Naive thymus-derived CD4-positive, alpha-beta T cell (primary cell): ENCODE measurements at regions of chr10 and their contacts with region 1.

Region 1: GRCh38 chr10:91006001-91006751 is 85.3 kb upstream of the ANKRD1 start:
- DNase-seq: peak; percentile 37 to 78 (median 68)
- ATAC-seq: peak; percentile 95
- H3K4me3 ChIP-seq: peak overlapping the region; percentile 7
- H3K4me3 Mint-ChIP-seq: peak overlapping the region in 9 of 10 donors; percentile 31 to 76 (median 68)
- H3K27ac ChIP-seq: peak overlapping the region; percentile 21
- H3K27ac Mint-ChIP-seq: peak overlapping the region; percentile 37 to 86 (median 74)
- H3K4me1 ChIP-seq: peaks cover 7 to 19% of the 10 kb centered on the region in 2 donors
- H3K4me1 Mint-ChIP-seq: peaks cover 0 to 26% (median 21%) of the 10 kb centered on the region in 7 donors
- H3K27me3 ChIP-seq: no peaks in the 10 kb centered on the region
- H3K27me3 Mint-ChIP-seq: peaks cover 0 to 22% (median 0%) of the 10 kb centered on the region in 5 donors

Region 2: DNA sequence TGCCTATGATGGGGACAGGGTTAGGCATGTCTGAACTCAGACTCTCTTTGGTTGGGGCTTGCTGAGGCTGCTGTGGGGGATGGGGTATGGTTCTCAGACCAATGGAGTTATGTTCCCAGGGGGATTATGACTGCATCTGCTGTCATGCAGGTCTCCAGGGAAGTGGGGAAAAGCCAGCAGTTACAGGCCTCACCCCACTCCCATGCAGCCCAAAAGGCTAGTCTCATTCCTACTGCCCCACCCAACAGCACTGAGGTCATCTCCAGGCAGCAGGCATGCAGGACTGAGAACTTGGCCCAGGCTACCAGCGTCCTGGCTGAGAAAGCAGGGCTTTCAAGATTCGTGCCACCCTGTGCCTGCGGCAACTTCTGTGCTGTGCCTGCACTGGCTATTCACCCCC is 521.7 kb before region 1 on chr10:
- CTCF ChIA-PET with region 1: no interaction called
- POLR2A ChIA-PET with region 1: no interaction called
- intact Hi-C with region 1: no loop called
- DNase-seq: no peak
- ATAC-seq: no peak
- H3K4me3 ChIP-seq: no peak overlapping the region
- H3K4me3 Mint-ChIP-seq: no peak overlapping the region
- H3K27ac ChIP-seq: no peak overlapping the region
- H3K27ac Mint-ChIP-seq: no peak overlapping the region
- H3K4me1 ChIP-seq: no peaks in the 10 kb centered on the region
- H3K4me1 Mint-ChIP-seq: no peaks in the 10 kb centered on the region
- H3K27me3 ChIP-seq: no peaks in the 10 kb centered on the region
- H3K27me3 Mint-ChIP-seq: peaks cover 0 to 9% (median 0%) of the 10 kb centered on the region in 5 donors

Region 3: DNA sequence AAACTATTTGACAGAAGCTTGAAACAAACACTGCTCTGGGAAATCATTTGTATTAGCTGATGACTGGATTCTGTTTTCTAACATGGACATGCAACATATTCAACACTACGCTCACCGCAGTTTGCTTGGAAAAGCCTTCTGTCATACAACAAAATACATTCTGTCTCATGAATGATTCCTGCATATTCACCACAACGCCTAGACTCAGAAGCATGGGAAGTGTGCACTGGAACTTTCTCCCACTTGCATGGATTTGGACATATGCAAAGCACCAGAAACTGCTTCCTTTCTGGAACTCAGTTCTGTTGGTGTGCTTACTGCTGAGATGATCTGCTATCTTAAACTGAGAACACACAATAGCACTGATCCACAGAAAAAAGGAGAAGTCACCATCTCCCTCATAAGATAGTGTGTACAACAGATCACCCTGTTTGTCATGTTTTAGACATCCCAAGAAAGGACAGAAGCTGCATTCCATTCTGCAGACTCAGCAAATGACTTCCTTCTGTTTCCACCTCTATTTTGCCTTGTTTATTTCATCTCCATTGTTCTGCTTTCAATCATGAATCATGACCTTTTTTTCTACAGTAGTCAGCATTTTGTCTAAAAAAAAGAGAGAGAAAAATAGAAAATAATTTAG is 264.1 kb before region 1 on chr10:
- CTCF ChIA-PET with region 1: no interaction called
- POLR2A ChIA-PET with region 1: no interaction called
- intact Hi-C with region 1: no loop called
- DNase-seq: no peak
- ATAC-seq: peak; percentile 20
- H3K4me3 ChIP-seq: no peak overlapping the region
- H3K4me3 Mint-ChIP-seq: no peak overlapping the region
- H3K27ac ChIP-seq: no peak overlapping the region
- H3K27ac Mint-ChIP-seq: no peak overlapping the region
- H3K4me1 ChIP-seq: no peaks in the 10 kb centered on the region
- H3K4me1 Mint-ChIP-seq: no peaks in the 10 kb centered on the region
- H3K27me3 ChIP-seq: no peaks in the 10 kb centered on the region
- H3K27me3 Mint-ChIP-seq: peaks cover 19 to 39% (median 23%) of the 10 kb centered on the region in 5 donors

Region 4: DNA sequence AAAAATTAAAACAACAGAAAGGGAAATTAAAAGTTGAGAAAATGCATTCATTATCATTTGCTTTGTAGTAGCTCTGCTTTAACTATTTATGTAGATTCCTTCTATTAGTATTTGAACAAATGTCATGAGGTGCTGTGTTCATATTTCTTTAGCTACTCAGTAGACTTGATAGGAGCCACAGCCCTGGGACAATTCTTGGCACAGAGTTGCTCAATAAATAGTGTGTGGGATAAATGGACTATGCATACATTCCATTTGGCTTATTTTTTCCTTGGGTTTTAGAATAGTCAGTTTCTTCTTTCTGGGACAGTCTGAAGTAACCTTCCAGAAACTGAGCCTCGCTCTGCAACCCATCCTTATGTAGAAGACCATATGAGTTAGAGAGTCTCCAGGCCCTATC is 121.0 kb before region 1 on chr10:
- CTCF ChIA-PET with region 1: no interaction called
- POLR2A ChIA-PET with region 1: no interaction called
- intact Hi-C with region 1: loop called (anchors 1 to 5 kb)
- DNase-seq: no peak
- ATAC-seq: no peak
- H3K4me3 ChIP-seq: no peak overlapping the region
- H3K4me3 Mint-ChIP-seq: no peak overlapping the region
- H3K27ac ChIP-seq: no peak overlapping the region
- H3K27ac Mint-ChIP-seq: no peak overlapping the region
- H3K4me1 ChIP-seq: no peaks in the 10 kb centered on the region
- H3K4me1 Mint-ChIP-seq: peaks cover 0 to 8% (median 4%) of the 10 kb centered on the region in 7 donors
- H3K27me3 ChIP-seq: no peaks in the 10 kb centered on the region
- H3K27me3 Mint-ChIP-seq: no peaks in the 10 kb centered on the region

Region 5: DNA sequence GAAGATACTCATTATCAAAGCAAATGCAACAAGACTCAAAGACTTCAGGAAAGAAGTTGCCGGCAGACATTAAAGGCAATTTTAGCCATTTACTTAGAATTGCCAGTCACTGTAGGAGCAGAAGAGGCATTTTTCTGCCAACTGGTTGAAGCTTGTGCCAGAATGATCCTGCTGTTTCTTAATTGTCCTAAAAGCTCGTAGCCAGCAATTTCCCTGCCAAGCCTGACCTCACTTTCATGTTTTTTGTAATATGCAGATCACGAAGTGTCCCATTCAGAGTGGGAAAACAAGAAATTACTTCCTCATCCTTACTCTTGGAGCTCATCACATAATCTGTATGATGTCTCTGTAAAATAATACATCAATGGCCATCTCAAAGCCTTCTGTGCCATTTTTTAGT is 45.7 kb after region 1 on chr10:
- CTCF ChIA-PET with region 1: interaction called, 4 read pairs
- POLR2A ChIA-PET with region 1: no interaction called
- intact Hi-C with region 1: loop called in 1 of 2 experiments (anchors 5 kb)
- DNase-seq: no peak
- ATAC-seq: no peak
- H3K4me3 ChIP-seq: no peak overlapping the region
- H3K4me3 Mint-ChIP-seq: no peak overlapping the region
- H3K27ac ChIP-seq: no peak overlapping the region
- H3K27ac Mint-ChIP-seq: no peak overlapping the region
- H3K4me1 ChIP-seq: no peaks in the 10 kb centered on the region
- H3K4me1 Mint-ChIP-seq: peaks cover 0 to 3% (median 0%) of the 10 kb centered on the region in 7 donors
- H3K27me3 ChIP-seq: no peaks in the 10 kb centered on the region
- H3K27me3 Mint-ChIP-seq: peaks cover 0 to 33% (median 0%) of the 10 kb centered on the region in 5 donors

Region 6: DNA sequence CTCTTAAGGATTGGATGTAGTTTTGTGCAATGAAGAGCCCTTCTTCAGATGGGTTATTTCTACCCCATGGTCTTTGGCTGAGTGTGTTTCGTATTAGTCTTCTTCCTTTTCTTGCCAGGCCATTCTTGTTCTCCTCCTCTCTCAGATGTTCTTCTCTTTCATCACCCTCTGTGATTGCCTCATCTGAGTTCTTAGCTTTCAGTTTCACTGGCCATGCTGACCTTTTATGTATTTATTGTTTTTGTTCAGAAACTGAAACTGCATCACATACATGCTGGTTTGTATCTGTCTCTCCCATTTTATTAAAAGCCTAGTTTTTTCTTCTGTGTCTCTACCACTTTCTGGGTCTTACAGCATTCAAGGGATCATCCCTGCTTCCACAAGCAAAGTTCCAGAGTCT is 192.6 kb after region 1 on chr10:
- CTCF ChIA-PET with region 1: no interaction called
- POLR2A ChIA-PET with region 1: no interaction called
- intact Hi-C with region 1: no loop called
- DNase-seq: peak in 5 of 9 donors; percentile 21 to 45 (median 28)
- ATAC-seq: peak; percentile 55
- H3K4me3 ChIP-seq: no peak overlapping the region
- H3K4me3 Mint-ChIP-seq: peak overlapping the region in 8 of 10 donors; percentile 9 to 82 (median 54)
- H3K27ac ChIP-seq: peak overlapping the region; percentile 59
- H3K27ac Mint-ChIP-seq: peak overlapping the region; percentile 44 to 94 (median 86)
- H3K4me1 ChIP-seq: peaks cover 55 to 57% of the 10 kb centered on the region in 2 donors
- H3K4me1 Mint-ChIP-seq: peaks cover 55 to 91% (median 86%) of the 10 kb centered on the region in 7 donors
- H3K27me3 ChIP-seq: no peaks in the 10 kb centered on the region
- H3K27me3 Mint-ChIP-seq: no peaks in the 10 kb centered on the region

Region 7: DNA sequence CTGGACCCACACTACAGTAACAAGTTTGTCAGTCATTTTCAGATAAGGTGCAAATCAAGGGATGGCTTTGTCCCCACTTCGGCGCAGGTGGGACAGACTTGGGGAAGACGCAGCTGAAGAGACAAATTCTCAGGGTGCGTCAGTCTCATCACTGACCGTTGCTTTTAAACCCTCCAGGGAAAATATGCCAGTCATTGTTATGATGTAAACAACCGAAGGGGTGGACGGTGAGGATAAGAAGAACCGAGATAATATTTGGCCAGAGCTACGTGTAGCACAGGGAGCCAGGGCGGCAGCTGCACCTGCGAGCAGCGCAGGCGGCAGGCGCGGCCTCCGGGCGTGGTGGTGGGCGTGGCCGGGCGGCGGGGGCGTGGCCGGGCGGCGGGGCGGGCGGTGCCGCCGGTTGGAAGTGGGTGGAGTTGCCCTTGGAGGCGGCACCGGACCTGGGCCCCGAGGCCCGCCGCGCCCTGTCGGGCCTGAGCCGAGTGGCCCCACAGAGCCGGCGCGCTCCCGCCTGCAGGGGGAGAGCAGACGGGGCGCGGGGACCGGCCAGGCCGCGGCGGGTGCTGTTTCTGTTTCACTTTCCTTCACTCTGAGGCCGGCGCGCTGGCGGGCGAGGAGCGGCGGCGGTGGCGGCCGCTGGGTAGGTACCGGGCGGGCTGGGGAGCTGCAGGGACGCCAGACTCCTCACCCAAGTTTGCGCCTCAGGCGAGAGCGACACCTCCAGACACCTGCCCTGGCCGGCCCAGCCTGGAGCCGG is 214.2 kb after region 1 on chr10 and contains the start of gene PCGF5:
- CTCF ChIA-PET with region 1: interaction called, 3 read pairs
- POLR2A ChIA-PET with region 1: no interaction called
- intact Hi-C with region 1: loop called in 1 of 2 experiments (anchors 1 kb)
- DNase-seq: peak; percentile 82 to 98 (median 90)
- ATAC-seq: peak; percentile 98
- H3K4me3 ChIP-seq: peak within 1 kb of the TSS; percentile 68
- H3K4me3 Mint-ChIP-seq: peak within 1 kb of the TSS; percentile 84 to 96 (median 90)
- H3K27ac ChIP-seq: peak within 1 kb of the TSS; percentile 90
- H3K27ac Mint-ChIP-seq: peak within 1 kb of the TSS; percentile 76 to 95 (median 89)
- H3K4me1 ChIP-seq: peaks cover 28 to 34% of the 10 kb centered on the region in 2 donors
- H3K4me1 Mint-ChIP-seq: peaks cover 33 to 69% (median 55%) of the 10 kb centered on the region in 7 donors
- H3K27me3 ChIP-seq: no peaks in the 10 kb centered on the region
- H3K27me3 Mint-ChIP-seq: no peaks in the 10 kb centered on the region
- total RNA-seq, gene PCGF5: 41.2 to 62.3 (median 57.4) TPM

Region 8: GRCh38 chr10:91378061-91378460 is 371.9 kb after region 1 on chr10:
- CTCF ChIA-PET with region 1: no interaction called
- POLR2A ChIA-PET with region 1: no interaction called
- intact Hi-C with region 1: loop called in 1 of 2 experiments (anchors 5 kb)
- DNase-seq: peak in 7 of 9 donors; percentile 35 to 61 (median 50)
- ATAC-seq: peak; percentile 88
- H3K4me3 ChIP-seq: no peak overlapping the region
- H3K4me3 Mint-ChIP-seq: peak overlapping the region in 4 of 10 donors; percentile 1 to 51 (median 15)
- H3K27ac ChIP-seq: no peak overlapping the region
- H3K27ac Mint-ChIP-seq: no peak overlapping the region
- H3K4me1 ChIP-seq: peaks cover 11 to 16% of the 10 kb centered on the region in 2 donors
- H3K4me1 Mint-ChIP-seq: peaks cover 0 to 38% (median 32%) of the 10 kb centered on the region in 7 donors
- H3K27me3 ChIP-seq: no peaks in the 10 kb centered on the region
- H3K27me3 Mint-ChIP-seq: peaks cover 7 to 40% (median 21%) of the 10 kb centered on the region in 5 donors

Region 9: GRCh38 chr10:91632671-91633550 is 626.7 kb after region 1 on chr10 and contains the start of gene PPP1R3C:
- CTCF ChIA-PET with region 1: interaction called, 3 read pairs
- POLR2A ChIA-PET with region 1: no interaction called
- intact Hi-C with region 1: loop called in 1 of 2 experiments (anchors 1 kb)
- DNase-seq: peak; percentile 5 to 60 (median 17)
- ATAC-seq: peak; percentile 65
- H3K4me3 ChIP-seq: peak within 1 kb of the TSS; percentile 33
- H3K4me3 Mint-ChIP-seq: peak within 1 kb of the TSS; percentile 68 to 76 (median 73)
- H3K27ac ChIP-seq: no peak within 1 kb of the TSS
- H3K27ac Mint-ChIP-seq: peak within 1 kb of the TSS in 1 of 9 donors; percentile 7
- H3K4me1 ChIP-seq: peaks cover 0 to 5% of the 10 kb centered on the region in 2 donors
- H3K4me1 Mint-ChIP-seq: peaks cover 0 to 15% (median 7%) of the 10 kb centered on the region in 7 donors
- H3K27me3 ChIP-seq: peaks cover 0 to 14% of the 10 kb centered on the region in 2 donors
- H3K27me3 Mint-ChIP-seq: peaks cover 61 to 74% (median 64%) of the 10 kb centered on the region in 5 donors
- total RNA-seq, gene PPP1R3C: 0.15 TPM in 1 of 5 experiments, not detected in the others